Psoas muscle (tissue), 8 donors: ENCODE measurements at regions of chr14 and their contacts with region 1.

Region 1: GRCh38 chr14:104768437-104769323 is 15.7 kb downstream of the SIVA1 start:
- DNase-seq: peak; percentile 91 to 93
- ATAC-seq: peak; percentile 89 to 95 (median 92)
- H3K4me3 ChIP-seq: no peak overlapping the region
- H3K27ac ChIP-seq: no peak overlapping the region
- H3K4me1 ChIP-seq: no peaks in the 10 kb centered on the region
- H3K27me3 ChIP-seq: no peaks in the 10 kb centered on the region
- CTCF ChIP-seq: peak; percentile 94

Region 2: DNA sequence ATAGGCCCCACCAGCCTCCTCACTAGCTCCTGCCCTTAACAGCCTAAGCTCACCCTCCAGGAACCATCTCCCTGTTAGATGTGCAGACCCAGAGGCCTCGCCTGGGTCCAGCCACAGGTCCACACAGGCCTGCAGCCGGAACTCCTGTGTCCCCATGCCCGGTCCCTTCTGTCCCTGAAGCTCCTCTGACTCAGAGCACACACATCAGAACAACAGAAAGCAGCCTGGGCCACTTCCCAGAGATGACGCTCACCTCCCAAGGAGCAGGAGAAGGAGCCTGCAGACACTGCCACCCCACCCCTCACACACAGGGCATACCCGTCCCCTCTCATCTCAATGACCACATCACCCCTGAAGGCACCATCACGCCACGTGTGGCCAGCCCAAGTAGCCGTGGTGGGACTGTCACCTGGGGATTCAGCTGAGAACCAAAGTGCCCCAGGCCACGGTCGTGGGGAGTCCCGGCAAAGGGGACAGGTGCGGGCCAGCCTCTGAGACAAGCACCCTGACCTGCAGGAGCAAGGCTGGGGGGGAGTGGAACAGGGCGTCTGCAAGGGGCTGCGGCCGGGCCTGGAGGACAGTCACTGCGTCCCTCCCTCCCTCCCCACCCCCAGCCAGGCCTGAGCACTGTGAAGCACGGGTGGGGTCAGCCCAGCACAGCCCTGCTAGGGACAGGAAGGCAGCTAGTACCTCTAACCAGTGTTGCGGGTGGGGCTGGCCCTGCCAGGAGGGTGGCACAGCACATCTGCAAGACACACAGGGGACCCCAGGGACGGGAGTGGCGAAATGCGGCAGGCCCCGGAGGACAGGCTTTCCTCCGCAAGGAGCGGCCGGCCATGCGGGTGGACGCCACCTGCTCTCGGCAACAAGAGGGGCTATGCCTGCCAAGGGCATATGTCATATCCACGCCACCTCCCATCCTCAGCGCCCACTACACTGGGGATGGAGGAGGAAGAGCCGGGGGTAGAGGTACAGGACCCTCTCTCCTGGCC is 21.4 kb after region 1 on chr14:
- intact Hi-C with region 1: loop called in 1 of 2 experiments (anchors 1 kb)
- DNase-seq: no peak
- ATAC-seq: no peak
- H3K4me3 ChIP-seq: no peak overlapping the region
- H3K27ac ChIP-seq: no peak overlapping the region
- H3K4me1 ChIP-seq: peaks cover 32% of the 10 kb centered on the region
- H3K27me3 ChIP-seq: no peaks in the 10 kb centered on the region
- CTCF ChIP-seq: no peak

Region 3: GRCh38 chr14:104826189-104826860 is 57.6 kb after region 1 on chr14:
- intact Hi-C with region 1: loop called (anchors 1 to 2 kb)
- DNase-seq: peak; percentile 91 to 94
- ATAC-seq: peak; percentile 93 to 96 (median 95)
- H3K4me3 ChIP-seq: peak overlapping the region; percentile 69
- H3K27ac ChIP-seq: no peak overlapping the region
- H3K4me1 ChIP-seq: peaks cover 4% of the 10 kb centered on the region
- H3K27me3 ChIP-seq: peaks cover 0 to 14% (median 4%) of the 10 kb centered on the region in 3 donors
- CTCF ChIP-seq: peak; percentile 77

Region 4: DNA sequence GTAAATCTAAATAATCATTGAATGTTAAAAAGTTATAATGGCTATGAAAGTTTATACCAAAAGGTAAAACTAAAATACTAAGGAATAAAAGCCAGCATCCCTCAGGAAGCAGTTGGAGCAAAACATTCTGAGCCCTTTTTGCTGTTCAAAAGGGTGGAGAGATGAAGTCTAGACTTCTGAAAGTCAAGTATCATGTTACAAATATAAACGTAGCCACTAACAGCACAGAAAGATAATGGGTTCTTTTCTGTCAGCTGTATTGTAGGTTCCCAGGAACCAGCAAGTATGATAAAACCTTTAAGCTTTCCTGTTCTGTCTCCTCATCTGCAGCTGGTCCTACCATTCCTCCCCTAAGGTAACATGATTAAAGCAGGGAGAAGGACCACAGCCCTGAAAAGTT is 139.6 kb after region 1 on chr14:
- intact Hi-C with region 1: no loop called
- DNase-seq: no peak
- ATAC-seq: no peak
- H3K4me3 ChIP-seq: no peak overlapping the region
- H3K27ac ChIP-seq: no peak overlapping the region
- H3K4me1 ChIP-seq: no peaks in the 10 kb centered on the region
- H3K27me3 ChIP-seq: peaks cover 0 to 19% (median 2%) of the 10 kb centered on the region in 3 donors
- CTCF ChIP-seq: no peak